Activated CD4-positive, alpha-beta T cell treated with anti-CD3 and anti-CD28 coated beads, Interleukin-2, amount 10 ng/mL, durations not matched to agents 24 days and 14 days (primary cell): ENCODE measurements at regions of chr19 and their contacts with region 1.

Region 1: GRCh38 chr19:33406521-33407139 is 33.1 kb downstream of the CEBPG start:
- DNase-seq: peak; percentile 93
- H3K4me3 Mint-ChIP-seq: no peak overlapping the region
- H3K27ac Mint-ChIP-seq: no peak overlapping the region
- H3K4me1 Mint-ChIP-seq: no peaks in the 10 kb centered on the region
- H3K27me3 Mint-ChIP-seq: no peaks in the 10 kb centered on the region

Region 2: GRCh38 chr19:33125929-33126388 is 280.7 kb before region 1 on chr19:
- intact Hi-C with region 1: loop called (anchors 5 kb)
- DNase-seq: peak; percentile 85
- H3K4me3 Mint-ChIP-seq: no peak overlapping the region
- H3K27ac Mint-ChIP-seq: no peak overlapping the region
- H3K4me1 Mint-ChIP-seq: peaks cover 4% of the 10 kb centered on the region
- H3K27me3 Mint-ChIP-seq: no peaks in the 10 kb centered on the region

Region 3: GRCh38 chr19:33143897-33144405 is 262.7 kb before region 1 on chr19:
- intact Hi-C with region 1: no loop called
- DNase-seq: peak; percentile 90
- H3K4me3 Mint-ChIP-seq: no peak overlapping the region
- H3K27ac Mint-ChIP-seq: no peak overlapping the region
- H3K4me1 Mint-ChIP-seq: peaks cover 4% of the 10 kb centered on the region
- H3K27me3 Mint-ChIP-seq: peaks cover 2% of the 10 kb centered on the region

Region 4: GRCh38 chr19:33241530-33242101 is 165.0 kb before region 1 on chr19:
- intact Hi-C with region 1: loop called (anchors 2 kb)
- DNase-seq: no peak
- H3K4me3 Mint-ChIP-seq: no peak overlapping the region
- H3K27ac Mint-ChIP-seq: no peak overlapping the region
- H3K4me1 Mint-ChIP-seq: no peaks in the 10 kb centered on the region
- H3K27me3 Mint-ChIP-seq: peaks cover 2% of the 10 kb centered on the region